Naive thymus-derived CD8-positive, alpha-beta T cell (primary cell): ENCODE measurements at regions of chr1 and their contacts with region 1.

Region 1: DNA sequence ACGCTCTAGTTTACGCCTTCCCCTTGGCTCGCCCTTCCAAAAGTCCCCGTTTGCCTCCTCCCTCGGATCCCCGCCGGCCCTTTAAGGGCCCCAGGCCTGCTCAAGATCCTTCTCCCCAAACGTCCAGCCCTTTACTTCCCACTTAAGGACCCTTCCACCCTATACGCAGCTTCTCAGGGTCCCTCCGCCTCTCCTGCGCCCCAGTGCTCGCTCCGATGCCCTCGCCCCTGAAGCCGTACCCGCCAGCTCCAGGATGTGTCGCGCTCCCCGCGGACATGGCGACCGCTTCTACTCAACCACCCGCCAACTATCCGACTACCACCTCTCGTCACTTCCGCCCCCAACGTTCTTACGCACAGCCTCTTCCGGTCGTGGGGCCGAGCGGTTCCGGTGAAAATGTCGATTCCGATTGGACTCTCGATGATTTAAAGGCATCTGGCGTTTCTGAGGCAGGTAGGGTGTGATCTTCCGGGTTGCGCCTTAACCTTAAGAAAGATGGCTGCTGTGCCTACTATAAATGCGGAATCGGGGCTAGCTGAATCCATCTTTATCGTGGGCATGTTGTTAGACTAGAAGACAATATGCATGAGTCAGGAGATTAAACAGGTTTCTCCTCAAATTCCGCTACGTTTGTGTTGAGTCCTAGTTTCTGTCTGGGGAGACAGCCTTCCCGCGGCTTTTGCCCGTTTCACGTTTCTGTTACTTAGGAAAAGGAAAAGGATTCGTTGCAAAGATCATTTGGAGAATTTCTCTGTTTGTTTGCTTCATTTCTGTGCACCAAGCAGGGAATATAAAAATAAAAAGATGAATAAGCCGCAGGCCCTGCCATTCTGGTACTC is at the start of gene KHDC4:
- DNase-seq: peak; percentile 85 to 98 (median 95)
- ATAC-seq: peak; percentile 94 to 95
- H3K4me3 Mint-ChIP-seq: peak within 1 kb of the TSS in 1 of 10 donors; percentile 70
- H3K27ac Mint-ChIP-seq: peak within 1 kb of the TSS in 3 of 10 donors; percentile 27 to 80 (median 74)
- H3K4me1 Mint-ChIP-seq: peaks cover 9 to 48% (median 36%) of the 10 kb centered on the region in 4 donors
- H3K27me3 Mint-ChIP-seq: no peaks in the 10 kb centered on the region
- polyA plus RNA-seq, gene KHDC4: 5.0 to 7.2 (median 6.5) TPM

Region 2: DNA sequence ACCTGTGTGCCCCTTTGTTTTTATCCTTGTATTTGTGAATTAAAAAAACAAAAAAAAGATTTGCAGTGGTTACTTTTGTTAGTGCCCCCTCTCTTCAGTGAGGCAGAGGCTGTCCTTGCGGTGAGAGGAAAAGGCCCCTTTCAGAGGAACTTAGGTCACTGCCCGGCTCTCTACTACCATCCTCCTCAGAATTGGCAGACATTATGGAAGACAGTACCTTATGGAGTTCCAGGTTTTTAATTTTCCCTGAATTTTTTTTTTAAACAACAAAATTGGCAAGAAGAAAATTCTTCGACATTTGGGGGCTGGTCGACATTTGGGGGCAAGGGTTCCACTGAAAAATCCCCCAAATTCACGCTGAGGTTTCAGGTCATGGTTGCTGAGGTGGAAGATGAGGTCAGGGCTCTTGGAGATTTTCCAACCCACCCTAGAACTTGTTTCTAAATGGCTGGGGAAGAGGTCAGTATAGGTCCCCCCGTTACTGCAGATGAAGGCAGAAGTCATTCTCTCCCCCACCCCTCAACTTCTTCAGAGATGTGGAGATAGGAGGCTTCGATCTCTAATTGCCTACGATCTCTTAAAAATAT is 12.4 kb after region 1 on chr1:
- POLR2A ChIA-PET with region 1: interaction called, 25 read pairs
- DNase-seq: no peak
- ATAC-seq: peak in 1 of 2 donors; percentile 11
- H3K4me3 Mint-ChIP-seq: peak overlapping the region in 7 of 10 donors; percentile 22 to 74 (median 33)
- H3K27ac Mint-ChIP-seq: peak overlapping the region; percentile 64 to 96 (median 92)
- H3K4me1 Mint-ChIP-seq: peaks cover 13 to 57% (median 52%) of the 10 kb centered on the region in 4 donors
- H3K27me3 Mint-ChIP-seq: no peaks in the 10 kb centered on the region

Region 3: GRCh38 chr1:155951753-155952504 is 17.6 kb after region 1 on chr1:
- POLR2A ChIA-PET with region 1: interaction called, 14 read pairs
- DNase-seq: no peak
- ATAC-seq: no peak
- H3K4me3 Mint-ChIP-seq: no peak overlapping the region
- H3K27ac Mint-ChIP-seq: peak overlapping the region in 7 of 10 donors; percentile 3 to 70 (median 61)
- H3K4me1 Mint-ChIP-seq: peaks cover under 1 to 13% (median 3%) of the 10 kb centered on the region in 4 donors
- H3K27me3 Mint-ChIP-seq: no peaks in the 10 kb centered on the region

Region 4: DNA sequence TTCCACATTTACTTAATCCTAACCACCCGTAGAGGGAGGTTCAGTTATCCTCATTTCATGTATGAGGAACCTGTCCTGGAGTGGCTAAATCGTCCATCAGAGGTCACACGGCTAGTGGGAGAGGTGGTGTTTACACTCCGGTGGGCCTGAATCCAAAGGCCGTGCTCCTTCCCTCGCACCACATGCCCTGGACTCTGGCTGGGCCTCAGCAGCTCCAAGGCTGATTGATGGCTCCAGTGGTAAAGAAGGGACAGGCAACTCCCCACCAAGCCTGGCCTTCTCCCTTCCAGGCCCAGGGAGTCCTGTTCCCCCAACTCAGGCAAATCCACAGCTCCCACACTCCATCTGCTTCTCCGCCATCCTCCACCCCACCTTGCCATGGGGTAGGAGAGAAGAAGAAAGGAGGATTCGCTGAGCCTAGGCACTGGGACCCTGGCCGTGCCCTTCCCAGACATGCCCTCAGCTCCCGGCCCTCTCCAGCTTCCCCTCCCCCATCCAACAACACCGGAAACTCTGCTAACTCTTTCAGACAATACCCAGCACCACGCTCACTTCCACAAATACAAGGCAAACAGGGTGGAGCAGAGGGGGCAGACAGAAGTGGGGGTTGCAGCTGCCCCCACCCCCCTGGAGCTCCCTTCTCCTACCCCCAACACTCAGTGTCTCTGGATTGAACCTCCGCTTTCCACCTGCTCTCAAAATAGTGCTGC is 33.2 kb after region 1 on chr1:
- POLR2A ChIA-PET with region 1: interaction called, 16 read pairs
- DNase-seq: peak in 6 of 10 donors; percentile 36 to 71 (median 48)
- ATAC-seq: peak; percentile 48 to 65
- H3K4me3 Mint-ChIP-seq: peak overlapping the region; percentile 73 to 89 (median 83)
- H3K27ac Mint-ChIP-seq: peak overlapping the region; percentile 89 to 96 (median 93)
- H3K4me1 Mint-ChIP-seq: peaks cover 54 to 78% (median 74%) of the 10 kb centered on the region in 4 donors
- H3K27me3 Mint-ChIP-seq: no peaks in the 10 kb centered on the region

Region 5: DNA sequence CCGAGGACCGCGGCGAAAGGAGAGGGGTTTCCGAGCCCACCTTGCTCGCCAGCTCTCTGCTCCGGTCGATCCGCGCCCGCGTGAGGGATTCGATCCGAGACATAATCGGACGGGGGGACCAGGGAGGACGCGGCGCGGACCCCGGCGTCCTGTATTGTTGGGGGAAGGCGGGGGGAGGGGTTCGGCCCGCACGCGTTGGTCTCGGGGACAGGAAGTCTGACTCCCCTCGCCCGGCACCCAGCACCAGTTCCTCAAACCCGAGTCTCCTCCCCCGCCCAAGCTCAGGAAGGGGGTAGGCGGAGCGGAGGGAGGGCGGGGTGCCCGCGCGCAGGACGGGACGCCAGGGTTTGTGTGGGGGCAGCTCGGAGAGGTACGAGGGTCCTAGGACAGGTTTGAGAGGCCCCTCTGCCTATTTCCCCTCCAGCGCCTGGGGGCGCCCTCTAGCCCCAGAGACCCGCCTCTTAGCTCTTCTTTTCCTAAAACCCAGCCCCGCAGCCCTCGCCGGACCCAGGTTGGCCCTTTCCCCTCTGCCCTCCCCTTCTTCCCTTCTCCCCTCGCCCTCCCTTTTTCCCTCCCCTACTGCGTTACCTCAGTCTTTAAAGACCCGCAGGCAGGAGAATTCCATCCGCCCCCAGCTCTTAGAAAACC is 44.1 kb after region 1 on chr1 and contains the start of gene ARHGEF2:
- POLR2A ChIA-PET with region 1: interaction called, 74 read pairs
- DNase-seq: peak; percentile 63 to 89 (median 72)
- ATAC-seq: peak; percentile 59 to 65
- H3K4me3 Mint-ChIP-seq: peak within 1 kb of the TSS; percentile 89 to 100 (median 96)
- H3K27ac Mint-ChIP-seq: peak within 1 kb of the TSS; percentile 85 to 97 (median 95)
- H3K4me1 Mint-ChIP-seq: peaks cover 51 to 78% (median 70%) of the 10 kb centered on the region in 4 donors
- H3K27me3 Mint-ChIP-seq: no peaks in the 10 kb centered on the region
- polyA plus RNA-seq, gene ARHGEF2: 13.8 to 22.0 (median 15.8) TPM

Region 6: DNA sequence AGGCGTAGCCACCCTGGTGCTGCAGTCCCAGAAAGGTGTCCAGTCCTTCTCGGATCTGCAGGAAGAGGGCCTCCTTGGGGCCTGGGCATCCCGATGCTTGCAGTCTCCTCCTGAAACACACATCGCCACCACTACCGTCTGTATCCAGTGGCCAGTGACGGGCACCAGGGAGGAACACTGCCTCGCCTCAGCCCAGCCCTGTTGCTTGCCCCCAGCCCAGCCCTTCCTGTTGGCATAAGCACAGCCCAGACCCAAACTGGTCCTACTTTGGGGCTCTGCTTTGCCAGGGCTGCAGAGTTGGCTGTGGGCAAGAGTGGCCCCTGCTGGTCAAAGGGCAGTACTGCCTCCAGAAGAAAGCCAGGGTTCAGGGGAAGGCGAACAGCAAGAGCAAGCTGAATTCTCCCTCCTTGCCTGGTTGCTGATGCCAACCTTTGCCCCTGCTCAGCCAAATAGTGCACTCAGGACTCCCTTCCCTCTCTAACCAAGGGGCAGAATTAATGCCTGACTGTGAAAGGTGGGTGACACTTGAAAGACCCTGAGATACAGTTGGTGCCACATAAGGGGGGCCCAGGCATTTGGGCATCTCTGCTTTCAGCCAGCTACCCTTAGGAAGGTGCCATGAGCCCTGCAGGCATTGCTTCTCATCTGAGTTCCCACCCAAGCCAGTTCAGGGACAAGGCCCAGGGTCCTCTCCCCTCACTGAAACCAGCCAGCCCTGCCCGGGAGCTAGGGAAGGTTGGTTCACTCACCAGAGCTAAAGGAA is 55.1 kb after region 1 on chr1:
- POLR2A ChIA-PET with region 1: interaction called, 14 read pairs
- DNase-seq: peak; percentile 61 to 89 (median 80)
- ATAC-seq: peak; percentile 98 to 99
- H3K4me3 Mint-ChIP-seq: no peak overlapping the region
- H3K27ac Mint-ChIP-seq: peak overlapping the region in 6 of 10 donors; percentile 24 to 83 (median 43)
- H3K4me1 Mint-ChIP-seq: peaks cover 3 to 28% (median 13%) of the 10 kb centered on the region in 4 donors
- H3K27me3 Mint-ChIP-seq: no peaks in the 10 kb centered on the region